ENCODE measurements at regions of chr11 and their contacts with region 1.

Region 1: GRCh38 chr11:65135254-65136049 is 1.1 kb upstream of the SYVN1 start:
- DNase-seq: peak in 1 of 2 donors; percentile 32
- ATAC-seq: no peak

Region 2: GRCh38 chr11:64834723-64835620 is 300.5 kb before region 1 on chr11:
- intact Hi-C with region 1: no loop called
- DNase-seq: peak in 1 of 2 donors; percentile 66
- ATAC-seq: peak; percentile 76

Region 3: GRCh38 chr11:65180877-65181568 is 45.6 kb after region 1 on chr11:
- intact Hi-C with region 1: loop called in 1 of 2 experiments (anchors 2 kb)
- DNase-seq: peak; percentile 60 to 75
- ATAC-seq: peak; percentile 53